ENCODE measurements at regions of chrX and their contacts with region 1.

Region 1: DNA sequence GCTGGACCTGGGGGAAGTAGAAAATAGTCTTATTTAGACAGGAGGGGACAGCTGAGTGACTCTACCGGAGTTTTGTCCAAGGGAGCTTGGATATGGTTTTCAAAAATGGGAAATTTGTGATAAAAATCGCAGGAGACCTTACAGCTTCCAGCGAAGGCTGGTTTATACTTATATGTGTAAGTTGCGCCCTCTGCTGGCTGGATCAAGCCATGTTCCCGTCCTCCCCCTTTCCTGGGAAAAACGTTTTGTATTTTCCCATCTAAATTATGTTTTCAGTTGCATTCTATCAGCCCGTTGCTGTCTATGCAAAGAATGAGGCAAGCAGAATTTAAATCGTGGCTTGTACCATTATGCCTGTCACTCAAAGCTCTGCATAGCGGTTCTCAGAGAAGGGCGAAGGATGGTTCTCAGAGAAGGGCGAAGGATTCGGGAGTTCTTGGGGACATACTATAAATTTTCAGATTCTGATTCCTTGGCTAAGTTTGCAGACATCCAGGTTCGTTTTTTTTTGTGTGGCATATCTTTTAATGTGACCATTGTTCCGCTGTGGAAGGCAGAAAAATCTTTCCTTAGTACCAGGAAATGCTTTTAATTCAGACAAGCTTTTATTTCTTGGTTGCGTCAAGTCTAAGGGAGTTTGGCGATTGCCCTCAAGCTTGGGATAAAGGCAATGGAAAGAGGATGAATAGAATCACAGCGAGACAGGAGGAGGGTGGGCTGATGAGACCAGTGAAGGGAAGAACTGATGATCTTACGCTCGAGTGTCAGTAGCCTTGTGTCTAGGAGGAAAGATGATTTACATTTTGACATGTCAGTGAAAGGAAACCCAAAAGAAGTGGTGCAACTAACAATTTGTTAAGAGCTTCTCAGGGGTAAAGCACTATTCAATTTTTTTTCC is 128.5 kb upstream of the ARX start:
- DNase-seq: no peak

Region 2: GRCh38 chrX:24759786-24760185 is 384.5 kb before region 1 on chrX:
- intact Hi-C with region 1: loop called (anchors 5 kb)
- DNase-seq: no peak

Region 3: DNA sequence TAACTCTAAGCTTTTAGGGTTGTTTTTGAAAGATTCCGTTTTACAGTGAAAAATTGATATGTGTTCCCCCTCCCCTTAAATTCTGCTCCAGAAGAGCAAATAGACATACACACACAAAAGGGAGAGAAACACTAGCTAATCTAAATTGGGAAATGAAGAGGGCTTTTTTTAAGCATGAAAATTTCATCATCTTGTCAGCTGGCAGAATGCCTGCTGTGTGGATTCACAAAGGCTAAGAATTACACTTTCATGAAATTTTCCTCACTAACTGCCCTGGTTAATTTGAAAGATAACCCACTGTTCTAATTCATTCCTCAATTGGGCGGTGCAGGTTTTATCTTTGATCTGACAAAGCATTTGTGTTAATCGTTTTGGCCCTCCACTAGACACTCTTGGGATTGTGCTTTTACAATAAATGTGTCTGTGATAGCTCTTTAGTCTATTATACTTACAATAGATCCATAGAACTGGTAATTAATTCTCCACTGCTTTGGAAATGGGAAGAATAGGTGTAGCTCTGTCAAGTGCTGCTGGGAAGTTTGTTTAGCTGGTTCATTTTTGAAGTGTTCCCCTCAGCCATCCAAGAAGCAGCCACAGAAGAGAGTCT is 297.6 kb before region 1 on chrX:
- intact Hi-C with region 1: loop called (anchors 10 kb)
- DNase-seq: no peak

Region 4: DNA sequence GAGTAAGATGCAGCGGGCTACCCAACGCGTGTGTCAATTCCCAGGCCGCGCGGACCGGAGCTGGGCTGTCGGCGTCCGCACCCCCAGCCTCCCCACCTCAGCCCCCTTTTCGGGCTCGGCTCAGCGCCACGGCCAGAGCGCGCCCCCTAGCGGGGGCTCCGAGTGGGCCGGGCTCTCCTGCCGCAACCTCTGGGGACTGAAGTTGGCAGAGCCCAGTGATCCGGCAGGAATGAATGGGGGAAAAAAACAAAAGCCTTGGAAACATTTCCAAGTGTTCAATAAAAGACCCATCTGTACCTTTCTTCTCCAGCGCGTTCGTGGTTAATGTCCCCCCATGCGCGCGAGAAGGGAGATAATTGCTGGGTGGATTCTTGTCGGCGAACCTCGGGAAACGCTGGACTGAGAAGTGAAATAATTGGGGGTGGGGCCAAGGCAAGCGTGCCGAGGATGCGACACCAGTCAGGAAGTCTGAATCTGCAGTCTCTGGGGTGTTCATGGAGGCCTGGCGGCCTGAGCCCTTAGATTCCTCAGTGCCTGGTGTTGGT is 123.3 kb before region 1 on chrX:
- intact Hi-C with region 1: no loop called
- DNase-seq: no peak